B cell (primary cell): ENCODE measurements at regions of chrX and their contacts with region 1.

Region 1: GRCh38 chrX:13506574-13506973 is 62.8 kb upstream of the EGFL6 start:
- DNase-seq: peak; percentile 58
- ATAC-seq: no peak
- H3K4me3 ChIP-seq: no peak overlapping the region
- H3K4me3 Mint-ChIP-seq: no peak overlapping the region
- H3K27ac ChIP-seq: no peak overlapping the region
- H3K27ac Mint-ChIP-seq: no peak overlapping the region
- H3K4me1 ChIP-seq: no peaks in the 10 kb centered on the region
- H3K4me1 Mint-ChIP-seq: no peaks in the 10 kb centered on the region
- H3K27me3 ChIP-seq: no peaks in the 10 kb centered on the region
- H3K27me3 Mint-ChIP-seq: no peaks in the 10 kb centered on the region
- CTCF ChIP-seq: peak; percentile 79

Region 2: DNA sequence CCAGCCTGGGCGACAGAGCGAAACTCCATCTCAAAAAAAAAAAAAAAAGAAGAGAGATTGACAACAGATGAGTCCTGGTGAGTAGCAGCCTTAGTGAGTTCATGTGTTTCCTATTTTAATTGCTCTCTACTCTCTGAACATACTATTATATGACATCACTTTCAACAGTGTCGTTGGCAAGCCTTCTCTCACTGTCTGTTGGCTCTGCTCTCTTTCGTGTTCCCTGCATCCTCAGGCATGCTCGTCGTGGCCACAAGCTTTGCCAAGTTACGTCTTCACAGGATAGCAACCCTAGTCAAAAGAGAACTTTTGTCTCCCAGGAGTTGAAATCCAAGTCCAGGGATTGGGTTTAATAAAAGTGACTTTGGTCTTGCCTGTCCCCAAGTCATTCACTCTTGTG is 54.3 kb before region 1 on chrX:
- CTCF ChIA-PET with region 1: no interaction called
- POLR2A ChIA-PET with region 1: no interaction called
- intact Hi-C with region 1: no loop called
- DNase-seq: no peak
- ATAC-seq: no peak
- H3K4me3 ChIP-seq: no peak overlapping the region
- H3K4me3 Mint-ChIP-seq: no peak overlapping the region
- H3K27ac ChIP-seq: no peak overlapping the region
- H3K27ac Mint-ChIP-seq: no peak overlapping the region
- H3K4me1 ChIP-seq: no peaks in the 10 kb centered on the region
- H3K4me1 Mint-ChIP-seq: peaks cover 3% of the 10 kb centered on the region
- H3K27me3 ChIP-seq: no peaks in the 10 kb centered on the region
- H3K27me3 Mint-ChIP-seq: no peaks in the 10 kb centered on the region
- CTCF ChIP-seq: no peak

Region 3: DNA sequence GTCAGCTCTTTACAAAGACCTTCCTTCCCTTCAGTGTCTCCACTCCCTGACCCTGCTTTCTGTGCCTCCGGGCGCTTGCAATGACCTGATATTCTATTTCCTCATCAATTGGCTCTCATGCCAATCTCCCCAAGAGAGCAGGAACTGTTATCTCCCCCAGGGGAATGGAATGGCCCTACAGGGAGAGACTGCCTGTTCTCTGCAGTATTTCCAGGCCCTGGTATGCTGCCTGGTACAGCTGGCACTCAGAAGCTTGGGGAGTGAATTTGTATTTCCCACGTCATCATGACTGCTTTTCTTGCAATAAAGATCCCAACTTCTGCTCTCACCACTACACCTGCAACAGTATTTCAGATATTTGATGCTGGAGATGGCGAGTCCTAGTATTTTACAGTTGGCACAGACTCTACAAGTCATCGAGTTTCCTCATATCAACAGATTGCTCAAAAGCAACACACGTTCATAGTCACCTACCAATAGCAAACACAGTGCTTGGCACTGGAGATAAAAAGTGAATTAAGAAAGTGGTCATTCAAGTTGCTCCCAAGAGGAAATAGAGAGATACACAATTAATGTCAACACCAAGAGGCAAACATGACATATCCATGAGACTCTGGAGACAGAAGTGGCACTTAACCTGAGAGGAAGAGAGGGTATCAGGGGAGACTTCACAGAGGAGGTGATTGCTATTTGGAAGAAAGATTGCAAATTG is 27.7 kb before region 1 on chrX:
- CTCF ChIA-PET with region 1: no interaction called
- POLR2A ChIA-PET with region 1: no interaction called
- intact Hi-C with region 1: no loop called
- DNase-seq: no peak
- ATAC-seq: no peak
- H3K4me3 ChIP-seq: no peak overlapping the region
- H3K4me3 Mint-ChIP-seq: no peak overlapping the region
- H3K27ac ChIP-seq: no peak overlapping the region
- H3K27ac Mint-ChIP-seq: peak overlapping the region; percentile 32
- H3K4me1 ChIP-seq: peaks cover 11 to 15% of the 10 kb centered on the region in 2 donors
- H3K4me1 Mint-ChIP-seq: peaks cover 21% of the 10 kb centered on the region
- H3K27me3 ChIP-seq: no peaks in the 10 kb centered on the region
- H3K27me3 Mint-ChIP-seq: no peaks in the 10 kb centered on the region
- CTCF ChIP-seq: no peak

Region 4: GRCh38 chrX:13533726-13534125 is 27.2 kb after region 1 on chrX:
- CTCF ChIA-PET with region 1: no interaction called
- POLR2A ChIA-PET with region 1: no interaction called
- intact Hi-C with region 1: no loop called
- DNase-seq: no peak
- ATAC-seq: no peak
- H3K4me3 ChIP-seq: no peak overlapping the region
- H3K4me3 Mint-ChIP-seq: no peak overlapping the region
- H3K27ac ChIP-seq: no peak overlapping the region
- H3K27ac Mint-ChIP-seq: no peak overlapping the region
- H3K4me1 ChIP-seq: no peaks in the 10 kb centered on the region
- H3K4me1 Mint-ChIP-seq: no peaks in the 10 kb centered on the region
- H3K27me3 ChIP-seq: no peaks in the 10 kb centered on the region
- H3K27me3 Mint-ChIP-seq: peaks cover 6% of the 10 kb centered on the region
- CTCF ChIP-seq: no peak

Region 5: GRCh38 chrX:13653022-13653693 is 146.6 kb after region 1 on chrX and contains the start of gene TCEANC:
- CTCF ChIA-PET with region 1: interaction called, 4 read pairs
- POLR2A ChIA-PET with region 1: no interaction called
- intact Hi-C with region 1: loop called (anchors 5 kb)
- DNase-seq: peak; percentile 92
- ATAC-seq: peak; percentile 93
- H3K4me3 ChIP-seq: peak within 1 kb of the TSS; percentile 59 to 92 (median 78)
- H3K4me3 Mint-ChIP-seq: peak within 1 kb of the TSS; percentile 94
- H3K27ac ChIP-seq: peak within 1 kb of the TSS; percentile 84 to 96
- H3K27ac Mint-ChIP-seq: peak within 1 kb of the TSS; percentile 96
- H3K4me1 ChIP-seq: peaks cover 12 to 15% of the 10 kb centered on the region in 2 donors
- H3K4me1 Mint-ChIP-seq: peaks cover 11% of the 10 kb centered on the region
- H3K27me3 ChIP-seq: no peaks in the 10 kb centered on the region
- H3K27me3 Mint-ChIP-seq: no peaks in the 10 kb centered on the region
- CTCF ChIP-seq: no peak
- total RNA-seq, gene TCEANC: 10.0 and 10.7 TPM in 2 replicates

Region 6: GRCh38 chrX:13761606-13762414 is 255.2 kb after region 1 on chrX:
- CTCF ChIA-PET with region 1: no interaction called
- POLR2A ChIA-PET with region 1: no interaction called
- intact Hi-C with region 1: loop called (anchors 5 kb)
- DNase-seq: no peak
- ATAC-seq: no peak
- H3K4me3 ChIP-seq: no peak overlapping the region
- H3K4me3 Mint-ChIP-seq: no peak overlapping the region
- H3K27ac ChIP-seq: peak overlapping the region; percentile 38 to 49
- H3K27ac Mint-ChIP-seq: peak overlapping the region; percentile 50
- H3K4me1 ChIP-seq: peaks cover 46 to 49% of the 10 kb centered on the region in 2 donors
- H3K4me1 Mint-ChIP-seq: peaks cover 51% of the 10 kb centered on the region
- H3K27me3 ChIP-seq: no peaks in the 10 kb centered on the region
- H3K27me3 Mint-ChIP-seq: no peaks in the 10 kb centered on the region
- CTCF ChIP-seq: no peak